PC-9 (cell line): ENCODE measurements at regions of chr7 and their contacts with region 1.

Region 1: GRCh38 chr7:155714702-155715101 is 70.2 kb downstream of the RBM33 start:
- DNase-seq: no peak
- H3K4me3 ChIP-seq: no peak overlapping the region
- H3K27ac ChIP-seq: no peak overlapping the region
- H3K4me1 ChIP-seq: no peaks in the 10 kb centered on the region
- H3K27me3 ChIP-seq: no peaks in the 10 kb centered on the region
- CTCF ChIP-seq: no peak

Region 2: DNA sequence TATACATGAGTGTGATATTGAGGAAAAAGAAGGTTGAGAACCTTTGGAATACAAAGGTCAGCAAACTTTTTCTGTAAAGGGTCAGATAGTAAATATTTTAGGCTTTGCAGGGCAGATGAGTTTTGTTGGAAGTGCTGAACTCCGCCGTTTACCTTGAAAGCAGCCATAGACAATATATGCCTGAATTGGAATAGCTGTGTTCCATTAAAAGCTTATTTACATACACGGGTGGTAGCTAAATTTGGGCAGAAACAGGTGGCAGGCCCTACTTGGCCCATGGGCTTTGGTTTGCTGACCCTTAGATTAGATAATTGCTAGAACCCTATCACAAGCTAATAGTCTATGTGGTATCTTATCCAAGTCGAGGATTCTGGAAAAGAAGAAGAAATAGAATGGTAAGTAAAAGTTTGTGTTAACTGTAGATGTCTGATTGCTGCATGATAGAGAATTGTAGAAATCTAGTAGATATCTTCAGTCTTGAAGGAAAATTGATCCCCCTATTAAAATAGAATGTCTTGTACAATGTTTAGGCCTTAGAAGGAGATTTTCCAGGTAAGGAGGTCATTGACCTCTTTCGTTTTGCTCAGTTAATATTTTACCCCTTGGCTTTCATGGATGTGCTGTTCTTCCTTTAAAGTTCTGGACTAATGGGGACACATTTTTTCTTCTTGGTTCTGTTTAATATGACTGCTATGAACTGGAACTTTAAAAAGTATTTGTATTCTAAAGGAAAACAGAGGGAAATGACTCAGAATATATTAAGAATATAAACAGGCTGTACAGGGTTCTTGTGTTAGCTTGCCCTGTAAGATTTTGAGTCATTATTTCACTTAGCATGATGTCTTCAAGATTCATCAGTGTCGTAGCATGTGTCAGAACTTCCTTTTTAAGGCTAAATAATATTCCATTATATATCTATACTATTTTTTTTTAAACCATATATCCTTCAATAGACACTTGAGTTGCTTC is 62.3 kb before region 1 on chr7:
- CTCF ChIA-PET with region 1: no interaction called
- POLR2A ChIA-PET with region 1: interaction called, 19 read pairs
- intact Hi-C with region 1: no loop called
- DNase-seq: no peak
- H3K4me3 ChIP-seq: no peak overlapping the region
- H3K27ac ChIP-seq: no peak overlapping the region
- H3K4me1 ChIP-seq: peaks cover 7% of the 10 kb centered on the region; the same call in 1 of the 2 replicates
- H3K27me3 ChIP-seq: no peaks in the 10 kb centered on the region
- CTCF ChIP-seq: no peak

Region 3: GRCh38 chr7:157228864-157229422 is 1514.2 kb after region 1 on chr7:
- CTCF ChIA-PET with region 1: no interaction called
- POLR2A ChIA-PET with region 1: no interaction called
- intact Hi-C with region 1: loop called (anchors 5 kb)
- DNase-seq: peak in 1 of 2 experiments; percentile 37
- H3K4me3 ChIP-seq: no peak overlapping the region
- H3K27ac ChIP-seq: no peak overlapping the region
- H3K4me1 ChIP-seq: no peaks in the 10 kb centered on the region
- H3K27me3 ChIP-seq: no peaks in the 10 kb centered on the region
- CTCF ChIP-seq: peak; percentile 70